T-cell (primary cell): ENCODE measurements at regions of chr19 and their contacts with region 1.

Region 1: GRCh38 chr19:37334179-37335071 is 36.5 kb upstream of the ZNF527 start:
- DNase-seq: peak; percentile 65 to 96 (median 89)
- ATAC-seq: peak; percentile 96 to 99 (median 98)
- H3K4me3 ChIP-seq: peak overlapping the region; percentile 74 to 85
- H3K4me3 Mint-ChIP-seq: peak overlapping the region; percentile 87 to 88 (median 88)
- H3K27ac ChIP-seq: peak overlapping the region; percentile 74
- H3K27ac Mint-ChIP-seq: peak overlapping the region; percentile 70 to 85
- H3K4me1 ChIP-seq: peaks cover 12 to 21% of the 10 kb centered on the region in 2 experiments
- H3K4me1 Mint-ChIP-seq: peaks cover 31 to 45% (median 37%) of the 10 kb centered on the region in 3 donors
- H3K27me3 ChIP-seq: no peaks in the 10 kb centered on the region
- H3K27me3 Mint-ChIP-seq: no peaks in the 10 kb centered on the region

Region 2: GRCh38 chr19:37313335-37313627 is 21.1 kb before region 1 on chr19:
- CTCF ChIA-PET with region 1: interaction called in 1 of 2 experiments, 7 read pairs
- POLR2A ChIA-PET with region 1: interaction called in 1 of 2 experiments, 12 read pairs
- DNase-seq: no peak
- ATAC-seq: no peak
- H3K4me3 ChIP-seq: no peak overlapping the region
- H3K4me3 Mint-ChIP-seq: peak overlapping the region; percentile 72 to 77 (median 74)
- H3K27ac ChIP-seq: no peak overlapping the region
- H3K27ac Mint-ChIP-seq: peak overlapping the region; percentile 1 to 65
- H3K4me1 ChIP-seq: peaks cover 0 to 23% of the 10 kb centered on the region in 2 experiments
- H3K4me1 Mint-ChIP-seq: peaks cover 18 to 29% (median 23%) of the 10 kb centered on the region in 3 donors
- H3K27me3 ChIP-seq: peaks cover 0 to 3% of the 10 kb centered on the region in 2 experiments
- H3K27me3 Mint-ChIP-seq: peaks cover 5 to 7% of the 10 kb centered on the region in 2 donors

Region 3: GRCh38 chr19:37452500-37453245 is 118.2 kb after region 1 on chr19:
- CTCF ChIA-PET with region 1: no interaction called
- POLR2A ChIA-PET with region 1: no interaction called
- DNase-seq: no peak
- ATAC-seq: no peak
- H3K4me3 ChIP-seq: no peak overlapping the region
- H3K4me3 Mint-ChIP-seq: no peak overlapping the region
- H3K27ac ChIP-seq: no peak overlapping the region
- H3K27ac Mint-ChIP-seq: no peak overlapping the region
- H3K4me1 ChIP-seq: no peaks in the 10 kb centered on the region
- H3K4me1 Mint-ChIP-seq: peaks cover 0 to 2% (median 0%) of the 10 kb centered on the region in 3 donors
- H3K27me3 ChIP-seq: no peaks in the 10 kb centered on the region
- H3K27me3 Mint-ChIP-seq: no peaks in the 10 kb centered on the region